Body of pancreas (tissue), 4 donors: ENCODE measurements at regions of chr2 and their contacts with region 1.

Region 1: DNA sequence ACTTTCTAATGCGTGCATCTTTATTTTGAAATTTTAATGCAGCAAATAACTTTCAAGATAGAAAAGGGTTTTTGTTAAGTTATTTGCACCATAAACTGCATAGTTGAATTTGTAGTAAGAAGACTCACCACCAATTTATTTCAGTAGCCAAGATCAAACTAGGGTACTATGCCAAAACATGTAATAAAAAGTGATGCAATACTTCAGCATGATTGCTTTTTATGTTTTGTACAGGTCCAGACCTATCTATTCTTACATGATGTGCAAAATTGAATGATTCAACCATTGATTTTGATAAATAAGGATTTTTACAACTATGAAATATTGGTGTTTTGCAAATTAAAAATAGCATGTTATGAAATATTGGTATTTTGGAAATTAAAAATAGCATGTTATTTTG is 26.7 kb downstream of the AGPS start:
- DNase-seq: no peak
- ATAC-seq: peak; percentile 63
- H3K4me3 ChIP-seq: no peak overlapping the region
- H3K27ac ChIP-seq: no peak overlapping the region
- H3K4me1 ChIP-seq: peaks cover 42% of the 10 kb centered on the region
- H3K27me3 ChIP-seq: no peaks in the 10 kb centered on the region
- CTCF ChIP-seq: no peak
- POLR2A ChIP-seq: no peak

Region 2: DNA sequence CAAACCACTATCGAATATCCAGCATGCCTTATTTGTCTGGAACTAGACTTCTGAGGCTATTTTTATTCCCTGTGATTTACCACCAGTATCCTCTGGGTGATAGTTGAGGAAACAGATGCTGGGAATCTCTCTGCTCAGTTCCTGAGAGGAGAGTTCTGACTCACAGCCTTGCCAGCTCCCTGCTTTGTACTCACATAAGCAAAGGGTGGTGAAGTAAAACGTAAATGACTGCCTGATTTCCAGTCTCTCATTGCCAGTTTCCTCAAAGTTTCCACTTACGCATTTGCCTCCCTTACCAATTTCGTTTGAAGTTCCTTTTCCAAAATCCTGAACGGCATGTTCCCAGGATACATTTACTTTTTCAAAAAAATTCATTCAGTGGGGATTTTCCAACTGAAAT is 275.8 kb before region 1 on chr2:
- intact Hi-C with region 1: no loop called
- DNase-seq: no peak
- ATAC-seq: peak; percentile 50
- H3K4me3 ChIP-seq: no peak overlapping the region
- H3K27ac ChIP-seq: no peak overlapping the region
- H3K4me1 ChIP-seq: peaks cover 7% of the 10 kb centered on the region
- H3K27me3 ChIP-seq: no peaks in the 10 kb centered on the region
- CTCF ChIP-seq: no peak
- POLR2A ChIP-seq: no peak

Region 3: GRCh38 chr2:177314194-177314593 is 105.1 kb before region 1 on chr2:
- intact Hi-C with region 1: no loop called
- DNase-seq: no peak
- ATAC-seq: peak; percentile 48
- H3K4me3 ChIP-seq: no peak overlapping the region
- H3K27ac ChIP-seq: no peak overlapping the region
- H3K4me1 ChIP-seq: no peaks in the 10 kb centered on the region
- H3K27me3 ChIP-seq: no peaks in the 10 kb centered on the region
- CTCF ChIP-seq: no peak
- POLR2A ChIP-seq: no peak

Region 4: DNA sequence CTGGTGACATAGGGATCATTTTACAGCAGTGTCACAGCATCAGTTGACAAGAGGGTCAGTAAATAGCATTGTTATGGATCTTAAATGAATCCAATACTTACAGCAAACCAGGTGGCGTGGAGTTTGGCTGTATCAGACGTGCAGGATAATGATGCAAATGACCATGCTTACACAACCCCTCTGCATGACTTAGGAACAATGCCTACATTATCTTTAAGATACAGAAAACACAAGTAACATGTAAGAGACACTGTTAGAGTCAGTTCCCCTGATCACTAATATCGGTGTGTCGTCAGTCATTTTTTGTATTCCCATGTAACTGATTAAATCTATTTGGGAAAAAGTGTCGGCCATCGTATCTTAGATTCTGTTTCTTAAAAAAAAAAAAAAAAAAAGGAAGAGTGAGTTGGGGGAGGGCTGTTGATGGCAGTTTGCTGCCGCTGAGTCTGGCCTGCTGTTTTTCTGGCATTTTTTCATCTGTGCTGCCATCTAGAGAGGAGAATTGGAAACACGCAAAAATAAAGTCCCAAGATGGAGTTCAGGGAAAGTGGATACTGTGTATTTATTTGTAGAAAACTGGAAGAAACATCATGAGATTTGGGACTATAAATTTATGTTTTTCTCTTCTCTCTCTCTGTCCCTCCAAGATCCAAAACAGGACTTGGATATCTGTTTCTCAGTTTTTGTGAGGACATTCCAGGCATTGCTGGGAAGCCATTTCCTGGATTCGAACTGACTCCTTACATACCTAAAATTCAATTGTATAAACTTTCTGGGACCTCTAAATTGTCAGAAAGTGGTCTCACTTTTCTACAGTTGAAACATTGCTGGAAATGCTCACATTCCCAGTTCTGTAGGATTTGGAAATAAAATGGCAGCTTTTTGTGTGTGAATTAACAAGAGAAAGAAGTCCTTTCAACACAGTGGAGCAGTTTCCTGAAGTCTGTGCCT is 87.0 kb before region 1 on chr2:
- intact Hi-C with region 1: loop called (anchors 10 kb)
- DNase-seq: peak; percentile 35 to 67 (median 46)
- ATAC-seq: peak; percentile 90
- H3K4me3 ChIP-seq: no peak overlapping the region
- H3K27ac ChIP-seq: no peak overlapping the region
- H3K4me1 ChIP-seq: no peaks in the 10 kb centered on the region
- H3K27me3 ChIP-seq: no peaks in the 10 kb centered on the region
- CTCF ChIP-seq: peak in 6 of 7 experiments; percentile 49 to 88 (median 79)
- POLR2A ChIP-seq: no peak